ENCODE measurements at regions of chr7 and their contacts with region 1.

Region 1: DNA sequence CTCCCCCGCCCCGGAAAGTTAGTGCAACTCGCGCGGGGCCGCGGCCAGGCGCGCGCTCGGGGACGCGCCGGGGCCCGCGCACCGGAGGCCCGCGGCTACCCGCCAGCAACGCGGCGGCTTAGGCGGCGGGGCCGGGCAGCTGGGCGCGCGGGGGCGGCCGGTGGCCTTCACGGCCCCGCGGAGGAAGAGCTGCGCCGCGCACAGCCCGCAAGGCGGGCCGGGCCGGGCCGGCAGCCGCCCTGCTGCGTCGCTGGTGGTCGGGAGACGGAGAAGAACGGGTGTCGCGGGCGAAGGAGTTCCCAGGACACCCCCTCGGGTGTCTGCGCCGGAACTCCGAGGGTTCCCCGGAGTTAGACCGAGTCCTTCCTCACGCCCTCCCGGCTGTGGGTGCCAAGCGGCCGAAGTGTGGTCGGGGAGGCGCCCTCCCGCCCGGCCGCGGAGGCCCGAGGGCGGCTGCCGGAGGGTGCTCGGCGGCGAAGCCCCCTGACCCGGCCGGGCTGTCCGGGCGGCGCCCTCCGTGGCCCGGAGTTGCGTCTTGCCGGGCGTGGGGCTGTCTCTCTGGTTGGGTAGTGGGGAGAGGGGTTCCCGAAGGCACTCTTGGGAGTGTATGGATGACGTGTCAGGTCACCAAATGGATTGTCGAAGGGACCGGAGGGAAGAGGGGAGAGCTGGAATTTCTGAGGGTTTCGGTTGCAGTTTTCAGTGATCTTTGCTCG is 584 bp downstream of the ST7 start:
- DNase-seq: peak in 4 of 9 donors; percentile 7 to 64 (median 36)
- ATAC-seq: peak; percentile 87
- H3K4me3 ChIP-seq: peak overlapping the region; percentile 79
- H3K4me3 Mint-ChIP-seq: peak overlapping the region; percentile 86 to 96 (median 94)
- H3K27ac ChIP-seq: peak overlapping the region; percentile 64
- H3K27ac Mint-ChIP-seq: peak overlapping the region; percentile 66 to 95 (median 88)
- H3K4me1 ChIP-seq: peaks cover 7 to 8% of the 10 kb centered on the region in 2 donors
- H3K4me1 Mint-ChIP-seq: peaks cover 13 to 25% (median 22%) of the 10 kb centered on the region in 7 donors
- H3K27me3 ChIP-seq: no peaks in the 10 kb centered on the region
- H3K27me3 Mint-ChIP-seq: peaks cover 0 to 24% (median 0%) of the 10 kb centered on the region in 5 donors

Region 2: GRCh38 chr7:116185956-116186355 is 767.9 kb before region 1 on chr7:
- CTCF ChIA-PET with region 1: no interaction called
- POLR2A ChIA-PET with region 1: no interaction called
- intact Hi-C with region 1: no loop called
- DNase-seq: no peak
- ATAC-seq: no peak
- H3K4me3 ChIP-seq: no peak overlapping the region
- H3K4me3 Mint-ChIP-seq: no peak overlapping the region
- H3K27ac ChIP-seq: no peak overlapping the region
- H3K27ac Mint-ChIP-seq: no peak overlapping the region
- H3K4me1 ChIP-seq: no peaks in the 10 kb centered on the region
- H3K4me1 Mint-ChIP-seq: peaks cover 0 to 6% (median 0%) of the 10 kb centered on the region in 7 donors
- H3K27me3 ChIP-seq: no peaks in the 10 kb centered on the region
- H3K27me3 Mint-ChIP-seq: peaks cover 0 to 32% (median 6%) of the 10 kb centered on the region in 5 donors

Region 3: GRCh38 chr7:116862234-116862950 is 91.5 kb before region 1 on chr7 and contains the start of gene CAPZA2:
- CTCF ChIA-PET with region 1: no interaction called
- POLR2A ChIA-PET with region 1: no interaction called
- intact Hi-C with region 1: loop called (anchors 1 kb)
- DNase-seq: peak; percentile 89 to 99 (median 96)
- ATAC-seq: peak; percentile 96
- H3K4me3 ChIP-seq: peak within 1 kb of the TSS; percentile 73
- H3K4me3 Mint-ChIP-seq: peak within 1 kb of the TSS; percentile 94 to 99 (median 97)
- H3K27ac ChIP-seq: peak within 1 kb of the TSS; percentile 91
- H3K27ac Mint-ChIP-seq: peak within 1 kb of the TSS; percentile 91 to 99 (median 96)
- H3K4me1 ChIP-seq: peaks cover 11 to 28% of the 10 kb centered on the region in 2 donors
- H3K4me1 Mint-ChIP-seq: peaks cover 29 to 49% (median 46%) of the 10 kb centered on the region in 7 donors
- H3K27me3 ChIP-seq: no peaks in the 10 kb centered on the region
- H3K27me3 Mint-ChIP-seq: peaks cover 4 to 26% (median 8%) of the 10 kb centered on the region in 5 donors
- total RNA-seq, gene CAPZA2: 86.2 to 129 (median 111) TPM